Lower leg skin (tissue), 4 donors: ENCODE measurements at regions of chr12 and their contacts with region 1.

Region 1: DNA sequence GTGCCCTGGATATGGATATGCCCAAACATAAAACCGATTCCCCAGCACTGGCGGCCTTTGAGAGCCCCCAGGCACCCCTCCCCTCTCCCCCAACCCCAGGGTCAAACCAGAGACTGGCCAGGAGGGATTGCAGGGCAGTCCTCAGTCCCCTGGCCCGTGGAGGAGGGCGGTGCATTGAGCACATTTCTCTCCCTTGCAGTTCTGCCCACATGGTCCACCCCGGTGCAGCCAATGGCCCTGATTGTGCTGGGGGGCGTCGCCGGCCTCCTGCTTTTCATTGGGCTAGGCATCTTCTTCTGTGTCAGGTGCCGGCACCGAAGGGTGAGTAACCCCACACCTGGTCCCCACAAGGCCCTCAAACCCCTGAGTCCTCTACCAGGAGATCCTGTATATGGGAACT is 3.4 kb upstream of the GPR162 start:
- DNase-seq: no peak
- H3K4me3 ChIP-seq: no peak overlapping the region
- CTCF ChIP-seq: no peak
- POLR2A ChIP-seq: no peak

Region 2: DNA sequence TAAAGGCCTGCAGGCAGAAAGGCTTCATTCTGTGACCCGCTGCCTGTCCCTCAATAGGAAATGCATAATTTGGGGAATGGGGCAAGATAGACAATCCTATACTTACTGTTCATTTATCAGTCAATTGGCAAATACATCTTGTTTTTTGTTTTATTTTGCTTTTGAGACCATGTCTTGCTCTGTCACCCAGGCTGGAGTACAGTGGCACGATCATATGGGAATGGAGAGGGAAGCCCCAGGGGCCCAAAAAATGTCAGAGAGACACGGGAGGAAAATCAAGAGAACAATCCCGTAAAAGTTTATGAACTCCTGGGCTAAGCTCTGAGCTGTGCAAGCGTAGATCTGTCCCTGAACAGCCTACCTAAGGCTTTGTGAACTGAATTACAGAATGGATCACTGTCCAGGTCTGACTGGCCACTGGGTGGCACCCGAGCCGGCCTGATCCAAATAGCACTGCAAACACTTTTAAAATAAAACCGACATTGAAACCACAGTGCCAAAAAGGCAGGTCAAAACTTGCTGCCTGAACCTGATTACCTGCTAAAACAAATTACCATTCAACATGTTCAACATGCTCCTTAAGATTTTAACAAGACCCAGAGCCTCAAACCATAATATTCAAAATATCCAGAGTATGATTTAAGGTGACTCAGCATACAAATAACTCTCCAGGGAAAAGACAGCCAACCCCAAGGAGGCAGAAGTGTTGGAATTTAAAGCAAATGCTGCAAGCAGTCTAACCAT is 82.6 kb before region 1 on chr12:
- intact Hi-C with region 1: loop called (anchors 5 kb)
- DNase-seq: peak; percentile 76 to 90
- H3K4me3 ChIP-seq: no peak overlapping the region
- CTCF ChIP-seq: no peak
- POLR2A ChIP-seq: no peak